Activated CD4-positive, alpha-beta T cell treated with anti-CD3 and anti-CD28 coated beads for 36 hours (primary cell): ENCODE measurements at regions of chr1 and their contacts with region 1.

Region 1: DNA sequence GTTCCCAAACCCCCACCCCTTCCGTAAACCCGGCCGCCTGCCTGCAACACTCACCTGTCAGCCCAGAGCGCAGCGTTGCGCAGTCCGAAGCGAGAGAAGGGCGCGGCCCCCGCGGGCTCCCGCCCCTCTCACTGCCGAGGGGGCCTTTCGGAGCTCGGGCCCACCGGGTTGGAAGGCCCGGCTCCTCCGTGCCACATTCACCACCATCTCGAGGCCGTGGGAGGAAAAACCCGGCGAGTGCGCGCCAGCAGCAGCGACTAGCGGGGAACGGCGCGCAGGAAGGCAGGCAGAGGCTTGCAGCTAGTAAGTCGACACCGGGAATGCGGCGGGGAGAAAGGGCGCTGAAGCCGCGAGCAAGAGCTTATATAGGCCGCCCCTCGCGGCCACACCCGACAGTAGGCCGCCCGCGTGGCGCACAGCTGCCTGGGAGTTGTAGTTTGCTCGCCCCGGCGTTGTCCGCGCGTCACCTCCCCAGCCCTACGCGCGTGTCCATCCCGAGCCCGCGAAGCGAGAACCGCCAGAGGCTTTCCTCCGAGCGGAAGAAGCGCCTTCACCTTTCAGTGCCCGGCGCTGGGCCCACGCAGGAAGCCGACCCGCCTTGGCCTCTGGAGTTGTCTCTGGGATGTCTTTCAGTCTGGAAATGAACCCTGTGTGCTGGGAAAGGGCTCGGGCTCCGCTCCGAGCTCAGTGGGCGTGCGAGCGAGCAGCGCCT is 10.4 kb upstream of the RAB42 start:
- DNase-seq: peak; percentile 97
- ATAC-seq: peak; percentile 91
- H3K4me3 Mint-ChIP-seq: peak overlapping the region; percentile 89
- H3K27ac Mint-ChIP-seq: peak overlapping the region; percentile 95
- H3K4me1 Mint-ChIP-seq: peaks cover 33% of the 10 kb centered on the region
- H3K27me3 Mint-ChIP-seq: no peaks in the 10 kb centered on the region

Region 2: GRCh38 chr1:28235755-28236655 is 345.7 kb before region 1 on chr1 and contains the start of gene ATP5IF1:
- CTCF ChIA-PET with region 1: no interaction called
- POLR2A ChIA-PET with region 1: interaction called, 12 read pairs
- intact Hi-C with region 1: no loop called
- DNase-seq: peak; percentile 97
- ATAC-seq: peak; percentile 97
- H3K4me3 Mint-ChIP-seq: no peak within 1 kb of the TSS
- H3K27ac Mint-ChIP-seq: no peak within 1 kb of the TSS
- H3K4me1 Mint-ChIP-seq: peaks cover 15% of the 10 kb centered on the region
- H3K27me3 Mint-ChIP-seq: no peaks in the 10 kb centered on the region
- total RNA-seq, gene ATP5IF1: 192 to 195 TPM

Region 3: GRCh38 chr1:28369371-28370238 is 212.1 kb before region 1 on chr1 and contains the start of gene PHACTR4:
- CTCF ChIA-PET with region 1: no interaction called
- POLR2A ChIA-PET with region 1: no interaction called
- intact Hi-C with region 1: loop called in 1 of 2 experiments (anchors 2 kb)
- DNase-seq: peak; percentile 90
- ATAC-seq: peak; percentile 93
- H3K4me3 Mint-ChIP-seq: peak within 1 kb of the TSS; percentile 92
- H3K27ac Mint-ChIP-seq: peak within 1 kb of the TSS; percentile 92
- H3K4me1 Mint-ChIP-seq: peaks cover 25% of the 10 kb centered on the region
- H3K27me3 Mint-ChIP-seq: no peaks in the 10 kb centered on the region
- total RNA-seq, gene PHACTR4: 23.0 to 30.1 TPM

Region 4: GRCh38 chr1:28480308-28480707 is 101.4 kb before region 1 on chr1:
- CTCF ChIA-PET with region 1: no interaction called
- POLR2A ChIA-PET with region 1: no interaction called
- intact Hi-C with region 1: no loop called
- DNase-seq: no peak
- ATAC-seq: no peak
- H3K4me3 Mint-ChIP-seq: no peak overlapping the region
- H3K27ac Mint-ChIP-seq: no peak overlapping the region
- H3K4me1 Mint-ChIP-seq: no peaks in the 10 kb centered on the region
- H3K27me3 Mint-ChIP-seq: no peaks in the 10 kb centered on the region

Region 5: DNA sequence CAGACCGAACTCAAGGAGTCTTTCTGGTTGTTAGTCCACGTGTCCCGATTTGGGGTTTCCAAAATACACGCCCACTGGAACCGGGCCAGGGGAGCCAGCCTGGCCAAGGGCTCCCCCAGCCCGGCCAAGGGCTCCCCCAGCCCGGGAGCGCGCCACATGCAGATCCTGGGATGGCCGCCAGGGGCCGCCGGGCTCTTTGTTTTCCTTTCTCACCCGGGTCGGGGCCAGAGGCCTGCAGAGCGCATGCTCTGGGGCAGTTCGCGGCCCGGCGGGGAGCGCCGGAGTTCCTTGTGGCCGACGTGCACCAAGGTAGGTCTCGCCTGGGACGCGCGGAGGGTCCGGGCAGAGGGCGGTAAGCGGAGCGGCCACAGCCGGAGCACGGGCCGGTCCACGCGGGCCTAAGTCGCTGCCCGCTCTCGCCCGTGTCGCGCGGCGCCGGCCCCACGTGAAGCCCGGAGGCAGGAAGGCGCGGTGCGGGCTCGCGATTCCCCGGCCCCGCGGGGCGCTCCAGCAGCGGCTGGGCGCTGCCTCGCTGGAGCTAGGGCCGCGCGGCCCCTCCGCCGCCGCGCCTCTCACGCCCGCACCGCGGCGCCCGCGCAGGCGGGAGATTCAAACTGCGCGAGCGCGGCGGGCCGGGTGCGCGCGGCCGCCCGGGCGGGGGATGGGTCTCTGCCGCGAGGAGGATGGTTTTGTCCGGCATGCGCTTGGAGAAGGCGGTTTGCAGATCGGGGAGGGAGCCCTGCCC is 63.5 kb before region 1 on chr1:
- CTCF ChIA-PET with region 1: interaction called, 4 read pairs
- POLR2A ChIA-PET with region 1: interaction called, 5 read pairs
- intact Hi-C with region 1: loop called (anchors 1 to 2 kb)
- DNase-seq: peak; percentile 95
- ATAC-seq: peak; percentile 66
- H3K4me3 Mint-ChIP-seq: peak overlapping the region; percentile 77
- H3K27ac Mint-ChIP-seq: peak overlapping the region; percentile 83
- H3K4me1 Mint-ChIP-seq: peaks cover 34% of the 10 kb centered on the region
- H3K27me3 Mint-ChIP-seq: no peaks in the 10 kb centered on the region

Region 6: GRCh38 chr1:28648474-28649198 is 66.9 kb after region 1 on chr1 and contains the start of gene RNU11:
- CTCF ChIA-PET with region 1: interaction called, 4 read pairs
- POLR2A ChIA-PET with region 1: interaction called, 84 read pairs
- intact Hi-C with region 1: loop called (anchors 1 kb)
- DNase-seq: peak; percentile 93
- ATAC-seq: peak; percentile 83
- H3K4me3 Mint-ChIP-seq: peak within 1 kb of the TSS; percentile 83
- H3K27ac Mint-ChIP-seq: peak within 1 kb of the TSS; percentile 100
- H3K4me1 Mint-ChIP-seq: peaks cover 34% of the 10 kb centered on the region
- H3K27me3 Mint-ChIP-seq: no peaks in the 10 kb centered on the region
- total RNA-seq, gene RNU11: not detected

Region 7: DNA sequence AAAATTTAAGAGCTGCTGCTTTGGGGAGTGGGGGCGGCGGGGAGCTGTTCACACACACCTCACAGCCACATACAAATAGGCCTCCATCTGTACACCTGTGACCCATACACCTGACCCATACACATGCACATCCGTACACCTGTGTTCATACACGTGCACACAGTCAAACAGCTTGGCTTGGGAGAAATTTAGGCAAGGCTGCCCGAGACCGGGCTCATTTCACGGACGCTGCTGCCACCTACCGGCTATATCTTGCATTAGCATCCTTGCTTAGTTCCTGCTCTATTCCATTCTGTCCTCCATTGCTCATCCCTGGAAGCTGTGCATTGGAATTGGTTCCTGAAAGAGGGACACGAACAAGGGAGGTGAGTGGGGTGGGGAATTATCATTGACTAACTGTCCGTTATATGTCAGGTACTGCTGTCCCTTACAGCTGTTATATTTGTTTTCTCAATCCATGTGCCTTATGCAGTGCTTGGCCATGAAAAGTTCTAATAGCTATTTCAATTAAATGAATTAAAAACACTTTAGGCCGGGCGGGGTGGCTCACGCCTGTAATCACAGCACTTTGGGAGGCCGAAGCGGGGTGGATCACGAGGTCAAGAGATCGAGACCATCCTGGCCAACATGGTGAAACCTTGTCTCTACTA is 295.6 kb after region 1 on chr1:
- CTCF ChIA-PET with region 1: no interaction called
- POLR2A ChIA-PET with region 1: no interaction called
- intact Hi-C with region 1: loop called in 1 of 2 experiments (anchors 2 kb)
- DNase-seq: peak; percentile 86
- ATAC-seq: peak; percentile 70
- H3K4me3 Mint-ChIP-seq: no peak overlapping the region
- H3K27ac Mint-ChIP-seq: no peak overlapping the region
- H3K4me1 Mint-ChIP-seq: peaks cover 10% of the 10 kb centered on the region
- H3K27me3 Mint-ChIP-seq: no peaks in the 10 kb centered on the region